ENCODE measurements at regions of chr15 and their contacts with region 1.

Region 1: DNA sequence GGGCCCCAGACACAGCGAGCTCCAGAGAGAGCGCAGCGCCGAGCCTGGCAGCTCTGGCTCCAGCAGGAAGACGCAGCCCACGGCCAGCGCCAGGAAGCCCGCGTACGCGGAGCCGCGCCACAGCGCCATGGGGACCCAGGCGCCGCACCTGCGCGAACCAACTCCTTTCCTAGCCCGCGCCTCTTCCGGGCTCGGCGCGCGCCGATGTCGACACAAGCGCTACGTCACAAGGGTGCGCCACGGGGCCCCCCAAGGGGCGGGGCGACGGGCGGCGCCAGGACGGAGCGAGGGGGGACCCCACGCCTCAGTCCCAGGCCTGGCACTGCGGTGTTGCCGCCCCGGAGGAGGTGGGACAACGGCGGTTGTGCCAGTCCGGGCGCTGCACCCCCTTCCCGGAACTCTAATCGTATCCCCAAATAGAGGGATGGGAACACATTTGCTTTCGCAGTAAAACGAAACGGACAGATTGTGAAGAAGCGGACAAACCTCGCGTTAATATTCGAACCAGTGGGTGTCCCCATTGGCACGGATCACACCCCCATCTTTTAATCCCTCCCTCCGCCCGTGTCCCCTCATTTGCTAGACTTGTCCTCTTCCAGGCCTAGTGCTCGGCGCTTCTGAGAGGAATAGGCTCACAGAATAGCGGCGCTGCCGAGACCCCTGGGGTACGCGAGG is at the start of gene ADPGK:
- DNase-seq: peak; percentile 90
- H3K4me3 Mint-ChIP-seq: peak within 1 kb of the TSS; percentile 93
- H3K27ac Mint-ChIP-seq: peak within 1 kb of the TSS; percentile 95
- H3K4me1 Mint-ChIP-seq: peaks cover 42% of the 10 kb centered on the region
- H3K27me3 Mint-ChIP-seq: no peaks in the 10 kb centered on the region
- total RNA-seq, gene ADPGK: 41.4 to 43.6 TPM

Region 2: GRCh38 chr15:72375847-72376581 is 407.7 kb before region 1 on chr15 and contains the start of gene HEXA:
- CTCF ChIA-PET with region 1: no interaction called
- intact Hi-C with region 1: loop called (anchors 5 kb)
- DNase-seq: peak; percentile 98
- H3K4me3 Mint-ChIP-seq: peak within 1 kb of the TSS; percentile 92
- H3K27ac Mint-ChIP-seq: peak within 1 kb of the TSS; percentile 94
- H3K4me1 Mint-ChIP-seq: peaks cover 42% of the 10 kb centered on the region
- H3K27me3 Mint-ChIP-seq: no peaks in the 10 kb centered on the region
- total RNA-seq, gene HEXA: 47.7 to 49.3 TPM

Region 3: GRCh38 chr15:72491768-72492167 is 291.9 kb before region 1 on chr15:
- CTCF ChIA-PET with region 1: no interaction called
- intact Hi-C with region 1: no loop called
- DNase-seq: no peak
- H3K4me3 Mint-ChIP-seq: no peak overlapping the region
- H3K27ac Mint-ChIP-seq: no peak overlapping the region
- H3K4me1 Mint-ChIP-seq: peaks cover 73% of the 10 kb centered on the region
- H3K27me3 Mint-ChIP-seq: no peaks in the 10 kb centered on the region

Region 4: DNA sequence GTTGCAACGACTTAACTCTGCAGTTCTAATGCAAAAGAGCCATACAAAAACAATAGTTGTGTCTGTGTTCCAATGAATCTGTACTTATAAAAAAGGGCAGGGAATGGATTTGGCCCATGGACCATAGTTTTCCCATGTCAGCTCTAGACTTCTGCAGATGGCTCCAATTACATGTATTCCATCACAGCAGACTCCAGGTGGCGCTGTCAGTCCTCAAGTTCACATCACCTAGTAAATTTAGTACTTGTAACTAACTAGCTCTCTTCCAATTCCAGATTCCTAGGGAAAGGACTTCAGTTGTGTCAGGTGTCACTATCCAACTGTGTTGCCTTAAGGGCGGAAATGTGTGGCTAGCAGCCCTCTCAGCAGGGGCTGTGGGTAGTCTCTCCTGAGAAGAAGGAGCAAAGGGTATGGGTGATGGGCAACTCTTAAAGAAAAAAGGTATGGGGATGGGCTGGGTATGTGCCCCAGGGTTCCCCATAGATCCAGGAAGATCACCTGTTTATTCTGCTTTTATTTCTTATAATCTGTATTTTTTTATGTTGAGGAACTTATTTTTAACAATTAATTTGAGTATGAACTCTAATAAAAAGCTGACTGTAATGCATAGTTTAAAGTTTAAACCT is 61.5 kb before region 1 on chr15:
- CTCF ChIA-PET with region 1: interaction called, 8 read pairs
- intact Hi-C with region 1: loop called (anchors 1 kb)
- DNase-seq: peak; percentile 86
- H3K4me3 Mint-ChIP-seq: no peak overlapping the region
- H3K27ac Mint-ChIP-seq: no peak overlapping the region
- H3K4me1 Mint-ChIP-seq: peaks cover 5% of the 10 kb centered on the region
- H3K27me3 Mint-ChIP-seq: no peaks in the 10 kb centered on the region

Region 5: DNA sequence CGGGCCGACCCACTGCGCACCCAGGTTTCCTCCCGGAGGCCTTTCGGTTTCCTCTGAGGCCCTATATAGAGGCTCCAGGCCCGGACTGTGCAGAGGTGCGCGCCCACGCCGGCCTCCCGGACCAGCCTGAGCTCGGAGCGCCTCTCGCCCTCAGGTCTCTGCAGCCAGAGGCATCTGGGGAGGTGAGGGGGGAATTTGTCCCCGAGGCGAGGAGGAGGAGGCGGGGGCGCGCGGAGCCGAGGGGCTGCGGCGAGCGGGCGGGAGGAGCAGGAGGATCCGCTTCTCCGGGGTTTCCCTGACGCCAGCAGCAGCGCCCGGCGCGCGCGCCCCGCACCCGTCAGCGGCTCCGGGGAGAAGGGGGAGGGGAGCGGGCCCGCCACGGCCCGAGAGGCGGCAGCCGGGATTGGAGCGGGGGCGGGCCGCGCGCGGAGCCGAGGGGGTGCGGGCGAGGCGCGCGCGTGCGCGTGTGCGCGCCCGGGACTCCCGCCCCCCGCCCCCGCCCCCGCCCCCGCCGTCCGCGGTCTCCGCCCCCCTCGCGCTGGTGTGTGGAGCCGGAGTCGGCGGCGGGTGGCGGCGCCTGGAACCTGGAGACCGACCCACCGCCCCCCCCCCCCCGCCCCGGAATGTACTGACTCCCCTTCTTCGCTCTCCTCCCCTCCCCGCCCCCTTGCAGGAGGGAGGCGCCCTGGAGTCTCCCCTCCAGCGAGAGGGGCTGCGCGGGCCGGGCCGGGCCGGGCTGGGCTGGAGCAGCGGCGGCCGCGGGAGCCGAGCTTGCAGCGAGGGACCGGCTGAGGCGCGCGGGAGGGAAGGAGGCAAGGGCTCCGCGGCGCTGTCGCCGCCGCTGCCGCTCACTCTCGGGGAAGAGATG is 268.3 kb after region 1 on chr15 and contains the start of gene NEO1:
- CTCF ChIA-PET with region 1: no interaction called
- intact Hi-C with region 1: loop called (anchors 1 kb)
- DNase-seq: peak; percentile 81
- H3K4me3 Mint-ChIP-seq: peak within 1 kb of the TSS; percentile 77
- H3K27ac Mint-ChIP-seq: no peak within 1 kb of the TSS
- H3K4me1 Mint-ChIP-seq: peaks cover 6% of the 10 kb centered on the region
- H3K27me3 Mint-ChIP-seq: peaks cover 8% of the 10 kb centered on the region
- total RNA-seq, gene NEO1: 4.3 to 4.4 TPM

Region 6: DNA sequence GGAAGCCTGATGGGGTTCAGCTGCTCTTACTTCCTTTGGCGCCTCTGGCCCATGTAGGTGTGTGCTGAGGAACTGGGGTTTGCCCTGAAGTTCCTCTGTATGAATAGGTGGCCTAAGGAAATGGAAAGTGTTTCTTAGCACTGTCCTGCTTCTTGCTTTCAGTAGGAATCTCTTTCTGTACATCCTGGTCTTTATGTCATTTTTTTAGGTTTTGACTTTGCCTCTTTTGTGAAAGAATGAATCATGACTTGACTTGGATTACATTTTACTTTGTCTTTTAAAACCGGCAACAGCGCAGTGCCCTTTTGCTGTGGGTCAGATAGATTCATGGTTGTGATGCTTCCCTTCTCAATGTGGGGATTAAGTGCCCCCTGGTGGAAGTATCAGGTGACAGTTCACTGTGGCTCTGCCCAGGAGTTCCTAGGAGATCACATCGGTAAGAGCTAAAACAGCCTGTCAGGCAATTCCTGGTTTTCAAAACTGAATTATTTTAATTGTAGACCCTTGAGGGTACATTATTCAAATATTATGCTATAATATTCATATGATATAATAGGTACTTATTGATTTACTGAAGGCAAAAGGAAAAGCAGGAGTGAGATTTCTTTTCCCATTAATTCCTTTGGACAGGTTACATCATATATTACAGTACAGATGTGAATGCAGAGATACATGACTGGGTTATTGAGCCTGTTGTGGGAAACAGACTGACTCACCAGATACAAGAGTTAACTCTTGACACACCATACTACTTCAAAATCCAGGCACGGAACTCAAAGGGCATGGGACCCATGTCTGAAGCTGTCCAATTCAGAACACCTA is 489.7 kb after region 1 on chr15:
- CTCF ChIA-PET with region 1: no interaction called
- intact Hi-C with region 1: loop called (anchors 2 kb)
- DNase-seq: peak; percentile 64
- H3K4me3 Mint-ChIP-seq: no peak overlapping the region
- H3K27ac Mint-ChIP-seq: no peak overlapping the region
- H3K4me1 Mint-ChIP-seq: peaks cover 4% of the 10 kb centered on the region
- H3K27me3 Mint-ChIP-seq: no peaks in the 10 kb centered on the region

Measured in activated naive CD4-positive, alpha-beta T cell treated with anti-CD3 and anti-CD28 coated beads for 36 hours (primary cell).